Calu3 (cell line): ENCODE measurements at regions of chr10 and their contacts with region 1.

Region 1: GRCh38 chr10:68156373-68157185 is 47.3 kb downstream of the MYPN start:
- DNase-seq: peak; percentile 75
- H3K4me3 Mint-ChIP-seq: no peak overlapping the region
- H3K27ac Mint-ChIP-seq: no peak overlapping the region
- H3K4me1 Mint-ChIP-seq: peaks cover 23% of the 10 kb centered on the region
- H3K27me3 Mint-ChIP-seq: no peaks in the 10 kb centered on the region
- CTCF ChIP-seq: peak; percentile 77

Region 2: DNA sequence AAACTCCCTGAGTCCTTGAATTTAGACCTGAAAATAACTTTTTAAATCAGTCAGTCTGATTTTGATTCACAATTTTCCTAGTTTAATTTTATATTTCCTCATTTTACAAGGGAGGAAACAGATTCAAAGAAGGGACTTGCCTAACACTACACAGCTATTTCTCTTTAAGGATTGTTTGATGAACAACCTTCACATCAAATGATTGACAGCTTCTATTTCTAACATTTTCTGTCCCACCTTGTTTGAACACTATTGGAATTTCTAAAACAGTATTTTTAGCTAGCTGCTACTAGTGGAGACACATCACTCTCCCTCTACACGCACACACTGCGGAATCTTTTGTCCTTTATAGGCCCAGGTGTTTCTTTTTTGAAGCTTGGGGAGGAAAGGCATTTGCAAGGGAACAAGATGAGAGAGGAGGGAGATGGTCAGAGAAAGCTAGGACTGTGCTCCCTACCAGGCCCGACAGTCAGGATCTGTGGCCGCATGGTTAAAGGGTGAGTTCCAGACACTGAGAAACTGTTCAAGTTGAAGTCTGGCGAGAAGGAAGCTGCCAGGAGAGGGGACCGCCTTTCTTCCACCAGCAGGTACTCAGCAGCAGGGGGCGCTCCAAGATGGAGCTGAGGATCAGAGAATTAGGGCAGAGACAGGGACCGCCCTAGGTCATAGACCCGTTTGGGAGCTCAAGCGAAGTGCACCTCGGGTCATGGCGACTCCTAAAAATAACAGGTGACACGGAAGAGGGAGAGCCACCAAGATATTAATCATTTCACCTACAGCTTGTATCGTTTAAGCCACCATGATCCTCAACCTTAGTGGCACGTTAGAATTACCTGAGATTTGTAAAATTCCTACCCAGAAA is 368.3 kb before region 1 on chr10:
- CTCF ChIA-PET with region 1: interaction called, 3 read pairs
- intact Hi-C with region 1: loop called (anchors 1 kb)
- DNase-seq: peak; percentile 88
- H3K4me3 Mint-ChIP-seq: peak overlapping the region; percentile 14
- H3K27ac Mint-ChIP-seq: peak overlapping the region; percentile 6
- H3K4me1 Mint-ChIP-seq: peaks cover 25% of the 10 kb centered on the region
- H3K27me3 Mint-ChIP-seq: no peaks in the 10 kb centered on the region
- CTCF ChIP-seq: peak; percentile 89

Region 3: GRCh38 chr10:67884313-67884841 is 272.2 kb before region 1 on chr10 and contains the start of gene SIRT1:
- CTCF ChIA-PET with region 1: no interaction called
- intact Hi-C with region 1: loop called (anchors 10 kb)
- DNase-seq: peak; percentile 98
- H3K4me3 Mint-ChIP-seq: peak within 1 kb of the TSS; percentile 93
- H3K27ac Mint-ChIP-seq: peak within 1 kb of the TSS; percentile 97
- H3K4me1 Mint-ChIP-seq: peaks cover 20% of the 10 kb centered on the region
- H3K27me3 Mint-ChIP-seq: no peaks in the 10 kb centered on the region
- CTCF ChIP-seq: no peak
- total RNA-seq, gene SIRT1: 19.7 and 26.1 TPM in 2 replicates

Region 4: GRCh38 chr10:68082872-68083271 is 73.7 kb before region 1 on chr10:
- CTCF ChIA-PET with region 1: interaction called, 19 read pairs
- intact Hi-C with region 1: loop called (anchors 1 kb)
- DNase-seq: no peak
- H3K4me3 Mint-ChIP-seq: no peak overlapping the region
- H3K27ac Mint-ChIP-seq: peak overlapping the region; percentile 36
- H3K4me1 Mint-ChIP-seq: peaks cover 29% of the 10 kb centered on the region
- H3K27me3 Mint-ChIP-seq: no peaks in the 10 kb centered on the region
- CTCF ChIP-seq: peak; percentile 23

Region 5: GRCh38 chr10:68135922-68136718 is 20.5 kb before region 1 on chr10:
- CTCF ChIA-PET with region 1: no interaction called
- intact Hi-C with region 1: loop called (anchors 1 kb)
- DNase-seq: peak; percentile 52
- H3K4me3 Mint-ChIP-seq: peak overlapping the region; percentile 51
- H3K27ac Mint-ChIP-seq: peak overlapping the region; percentile 90
- H3K4me1 Mint-ChIP-seq: peaks cover 25% of the 10 kb centered on the region
- H3K27me3 Mint-ChIP-seq: no peaks in the 10 kb centered on the region
- CTCF ChIP-seq: no peak

Region 6: GRCh38 chr10:68318331-68319059 is 161.9 kb after region 1 on chr10:
- CTCF ChIA-PET with region 1: no interaction called
- intact Hi-C with region 1: no loop called
- DNase-seq: no peak
- H3K4me3 Mint-ChIP-seq: no peak overlapping the region
- H3K27ac Mint-ChIP-seq: no peak overlapping the region
- H3K4me1 Mint-ChIP-seq: peaks cover 12% of the 10 kb centered on the region
- H3K27me3 Mint-ChIP-seq: no peaks in the 10 kb centered on the region
- CTCF ChIP-seq: no peak